Activated naive CD4-positive, alpha-beta T cell treated with anti-CD3 and anti-CD28 coated beads for 36 hours (primary cell): ENCODE measurements at regions of chr6 and their contacts with region 1.

Region 1: GRCh38 chr6:69796642-69797390 is at the start of gene LMBRD1:
- DNase-seq: peak; percentile 99
- H3K4me3 Mint-ChIP-seq: peak within 1 kb of the TSS; percentile 93
- H3K27ac Mint-ChIP-seq: peak within 1 kb of the TSS; percentile 96
- H3K4me1 Mint-ChIP-seq: peaks cover 42% of the 10 kb centered on the region
- H3K27me3 Mint-ChIP-seq: no peaks in the 10 kb centered on the region
- total RNA-seq, gene LMBRD1: 10.7 to 12.7 TPM

Region 2: GRCh38 chr6:68307301-68307700 is 1489.5 kb before region 1 on chr6:
- CTCF ChIA-PET with region 1: no interaction called
- intact Hi-C with region 1: no loop called
- DNase-seq: no peak
- H3K4me3 Mint-ChIP-seq: no peak overlapping the region
- H3K27ac Mint-ChIP-seq: no peak overlapping the region
- H3K4me1 Mint-ChIP-seq: no peaks in the 10 kb centered on the region
- H3K27me3 Mint-ChIP-seq: no peaks in the 10 kb centered on the region

Region 3: GRCh38 chr6:69783108-69783507 is 13.7 kb before region 1 on chr6:
- CTCF ChIA-PET with region 1: interaction called, 9 read pairs
- intact Hi-C with region 1: loop called (anchors 1 kb)
- DNase-seq: no peak
- H3K4me3 Mint-ChIP-seq: no peak overlapping the region
- H3K27ac Mint-ChIP-seq: peak overlapping the region; percentile 19
- H3K4me1 Mint-ChIP-seq: peaks cover 42% of the 10 kb centered on the region
- H3K27me3 Mint-ChIP-seq: no peaks in the 10 kb centered on the region

Region 4: DNA sequence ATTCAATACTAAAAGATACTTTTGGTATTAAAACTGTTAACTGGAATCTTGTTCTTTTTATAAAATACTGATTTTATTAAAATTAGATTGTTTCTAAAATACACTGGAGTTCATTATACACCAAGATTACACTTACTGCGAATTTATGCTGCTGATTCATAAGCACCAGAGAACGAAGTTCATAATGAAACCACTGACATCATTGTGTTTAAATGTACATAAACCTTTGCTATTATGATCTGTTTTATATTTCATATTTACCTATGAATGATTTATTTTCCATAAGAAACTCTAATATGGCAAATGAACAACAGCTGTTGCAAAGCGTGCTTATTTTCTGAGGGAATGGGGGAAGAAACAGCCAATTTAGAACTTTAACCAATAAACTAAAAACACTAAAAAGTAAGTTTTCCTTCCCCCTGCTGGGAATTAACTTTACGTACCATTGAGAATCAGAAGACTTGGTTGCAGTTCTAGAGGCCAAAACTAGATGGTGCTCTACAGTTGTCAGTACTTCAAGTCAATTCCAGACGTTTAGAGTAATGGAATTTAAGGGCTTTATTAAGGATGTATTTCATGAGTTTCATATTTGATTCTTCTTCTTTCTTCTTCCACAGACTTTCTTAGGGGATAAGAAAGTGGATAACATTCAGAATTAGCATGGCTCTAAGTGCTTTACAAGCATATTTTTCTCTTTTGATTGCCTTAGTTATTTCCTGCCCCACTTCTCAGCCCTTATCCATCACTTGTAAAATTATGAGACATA is 38.8 kb after region 1 on chr6:
- CTCF ChIA-PET with region 1: interaction called, 3 read pairs
- intact Hi-C with region 1: loop called (anchors 1 kb)
- DNase-seq: no peak
- H3K4me3 Mint-ChIP-seq: no peak overlapping the region
- H3K27ac Mint-ChIP-seq: no peak overlapping the region
- H3K4me1 Mint-ChIP-seq: peaks cover 3% of the 10 kb centered on the region
- H3K27me3 Mint-ChIP-seq: peaks cover 5% of the 10 kb centered on the region

Region 5: DNA sequence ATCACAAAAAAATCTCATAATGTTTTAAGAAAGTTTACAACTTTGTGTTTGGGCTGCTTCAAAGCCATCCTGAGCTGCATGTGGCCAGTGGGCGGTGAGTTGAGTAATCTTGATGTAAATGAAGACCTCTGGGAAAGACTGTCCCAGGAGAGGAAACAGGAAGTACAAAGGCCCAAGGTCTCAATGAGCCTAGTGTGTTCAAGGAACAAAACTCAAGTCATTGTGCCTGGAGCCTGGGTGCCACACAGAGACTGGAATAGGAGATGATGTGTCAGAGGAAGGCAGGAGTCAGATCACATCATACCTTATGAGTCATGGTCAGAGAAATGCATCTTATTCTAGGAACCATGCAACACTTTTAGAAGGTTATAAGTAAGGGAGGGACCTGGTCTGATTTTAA is 121.0 kb after region 1 on chr6:
- CTCF ChIA-PET with region 1: no interaction called
- intact Hi-C with region 1: loop called (anchors 1 kb)
- DNase-seq: peak; percentile 55
- H3K4me3 Mint-ChIP-seq: no peak overlapping the region
- H3K27ac Mint-ChIP-seq: no peak overlapping the region
- H3K4me1 Mint-ChIP-seq: peaks cover 7% of the 10 kb centered on the region
- H3K27me3 Mint-ChIP-seq: peaks cover 5% of the 10 kb centered on the region

Region 6: DNA sequence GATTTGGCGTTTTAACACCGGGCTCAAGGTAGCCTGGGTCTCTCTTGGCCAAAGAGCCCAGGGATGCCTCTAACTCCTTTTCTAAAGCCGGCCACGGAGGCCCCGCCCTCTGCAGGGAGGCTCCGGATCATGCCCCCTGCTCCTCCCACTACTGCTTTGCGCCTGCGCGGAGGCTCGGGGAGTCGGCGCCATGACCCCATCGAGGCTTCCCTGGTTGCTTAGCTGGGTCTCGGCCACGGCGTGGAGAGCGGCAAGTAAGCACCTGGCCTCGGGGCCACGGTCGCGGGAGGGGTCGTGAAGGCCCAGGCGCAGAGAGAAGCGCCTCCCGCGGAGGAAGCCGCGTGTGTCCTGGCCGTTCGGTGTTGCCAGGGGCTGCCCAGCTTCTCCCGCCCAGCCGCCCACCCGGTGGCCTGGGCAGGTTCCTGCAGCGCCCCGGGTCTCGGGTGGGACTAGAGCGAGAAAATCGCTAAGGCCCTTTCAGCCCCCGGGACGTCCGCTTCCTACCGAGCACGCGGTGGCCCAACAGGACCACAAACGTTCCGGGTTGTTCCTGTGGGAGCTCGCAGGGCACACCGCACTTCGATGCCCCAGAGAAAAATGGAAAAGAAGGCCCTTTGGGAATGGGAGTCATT is 770.1 kb after region 1 on chr6 and contains the start of gene SDHAF4:
- CTCF ChIA-PET with region 1: no interaction called
- intact Hi-C with region 1: loop called (anchors 5 kb)
- DNase-seq: peak; percentile 95
- H3K4me3 Mint-ChIP-seq: peak within 1 kb of the TSS; percentile 83
- H3K27ac Mint-ChIP-seq: peak within 1 kb of the TSS; percentile 83
- H3K4me1 Mint-ChIP-seq: peaks cover 11% of the 10 kb centered on the region
- H3K27me3 Mint-ChIP-seq: no peaks in the 10 kb centered on the region
- total RNA-seq, gene SDHAF4: 16.8 to 17.9 TPM